ENCODE measurements at regions of chr4 and their contacts with region 1.

Region 1: DNA sequence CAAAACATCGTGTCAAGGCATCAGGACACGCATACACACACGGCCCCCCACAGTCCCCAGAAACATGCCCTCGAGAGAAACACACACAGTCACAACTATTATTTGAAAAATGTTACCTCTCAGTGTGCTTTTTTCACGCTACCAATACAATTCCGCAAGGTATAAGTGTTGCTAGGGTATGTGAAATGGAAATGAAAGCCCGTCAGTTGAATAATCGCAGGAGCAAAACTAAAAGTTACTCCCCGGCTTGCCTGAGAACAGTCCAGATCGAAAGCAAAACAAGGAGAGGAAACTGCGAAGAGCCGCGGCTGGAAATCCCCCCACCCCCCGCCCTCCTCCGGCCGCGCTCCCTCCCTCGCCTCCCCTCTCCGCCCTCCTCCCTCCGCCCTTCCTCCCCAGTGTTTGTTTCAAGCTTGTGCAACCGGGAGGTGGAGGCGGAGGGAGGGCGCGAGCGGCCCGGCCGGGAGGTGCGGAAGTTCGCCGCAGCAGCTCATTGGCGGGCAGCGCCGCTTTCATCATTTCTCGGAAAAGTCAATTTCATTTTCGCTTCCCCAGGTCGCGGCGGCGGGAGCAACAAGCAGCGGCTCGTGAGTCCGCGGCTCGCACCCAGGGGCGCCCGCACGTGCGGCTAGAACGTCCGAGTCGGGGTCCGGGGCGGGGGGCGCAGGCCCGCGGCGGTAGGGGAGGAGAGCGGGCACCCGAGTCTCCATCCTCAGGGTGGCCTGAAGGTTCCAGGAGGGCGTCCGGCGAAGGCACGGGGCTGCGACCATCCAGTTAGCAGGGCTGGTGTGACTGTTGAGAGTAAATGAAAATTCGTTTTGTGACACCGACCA is at the start of gene IRF2:
- DNase-seq: peak; percentile 97
- H3K4me3 ChIP-seq: peak within 1 kb of the TSS; percentile 89
- H3K27ac ChIP-seq: peak within 1 kb of the TSS; percentile 89
- H3K4me1 ChIP-seq: peaks cover 55% of the 10 kb centered on the region
- CTCF ChIP-seq: no peak; the same call in 1 of the 2 replicates
- total RNA-seq, gene IRF2: 29.7 and 32.3 TPM in 2 replicates

Region 2: GRCh38 chr4:184287697-184288255 is 186.7 kb before region 1 on chr4:
- CTCF ChIA-PET with region 1: interaction called, 4 read pairs
- POLR2A ChIA-PET with region 1: interaction called, 12 read pairs
- intact Hi-C with region 1: loop called (anchors 1 kb)
- DNase-seq: peak; percentile 55
- H3K4me3 ChIP-seq: peak overlapping the region; percentile 58
- H3K27ac ChIP-seq: peak overlapping the region; percentile 96
- H3K4me1 ChIP-seq: peaks cover 99% of the 10 kb centered on the region
- CTCF ChIP-seq: peak; percentile 39; the same call in 1 of the 2 replicates

Region 3: DNA sequence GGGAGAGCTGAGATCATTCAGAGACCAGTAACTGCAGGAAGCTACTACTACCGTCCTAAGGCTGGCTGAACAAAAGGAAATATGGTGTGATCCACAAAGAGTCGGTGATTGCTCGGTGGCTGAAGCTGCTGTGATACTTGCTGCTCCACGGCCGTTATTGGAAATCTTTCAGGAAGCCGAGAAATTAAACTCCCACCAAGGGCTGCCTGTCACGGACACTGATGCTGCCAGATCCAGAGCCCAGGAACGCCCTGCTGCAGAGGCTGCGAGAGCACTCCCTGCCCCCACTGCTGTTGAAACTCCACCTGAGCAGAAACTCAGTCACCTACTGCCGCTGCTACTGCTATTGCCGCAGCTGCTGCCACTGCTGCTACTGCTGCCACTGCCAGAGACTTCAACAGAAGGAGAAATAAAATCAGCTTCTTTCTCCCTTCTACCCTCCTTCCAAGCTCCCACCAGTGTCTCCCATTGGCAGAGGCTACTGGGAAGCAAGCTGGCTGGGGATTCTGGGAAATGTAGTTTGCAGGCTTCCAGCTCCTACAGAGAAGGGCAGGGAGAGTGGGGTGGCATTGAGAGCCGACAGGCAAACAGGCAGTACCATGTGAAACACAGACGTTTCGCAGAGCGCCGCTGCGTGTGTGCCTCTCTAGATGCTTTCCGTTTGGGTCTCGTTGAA is 130.8 kb before region 1 on chr4:
- CTCF ChIA-PET with region 1: no interaction called
- POLR2A ChIA-PET with region 1: interaction called, 7 read pairs
- intact Hi-C with region 1: loop called (anchors 2 kb)
- DNase-seq: peak; percentile 64
- H3K4me3 ChIP-seq: peak overlapping the region; percentile 61
- H3K27ac ChIP-seq: peak overlapping the region; percentile 26
- H3K4me1 ChIP-seq: peaks cover 66% of the 10 kb centered on the region
- CTCF ChIP-seq: no peak

Region 4: DNA sequence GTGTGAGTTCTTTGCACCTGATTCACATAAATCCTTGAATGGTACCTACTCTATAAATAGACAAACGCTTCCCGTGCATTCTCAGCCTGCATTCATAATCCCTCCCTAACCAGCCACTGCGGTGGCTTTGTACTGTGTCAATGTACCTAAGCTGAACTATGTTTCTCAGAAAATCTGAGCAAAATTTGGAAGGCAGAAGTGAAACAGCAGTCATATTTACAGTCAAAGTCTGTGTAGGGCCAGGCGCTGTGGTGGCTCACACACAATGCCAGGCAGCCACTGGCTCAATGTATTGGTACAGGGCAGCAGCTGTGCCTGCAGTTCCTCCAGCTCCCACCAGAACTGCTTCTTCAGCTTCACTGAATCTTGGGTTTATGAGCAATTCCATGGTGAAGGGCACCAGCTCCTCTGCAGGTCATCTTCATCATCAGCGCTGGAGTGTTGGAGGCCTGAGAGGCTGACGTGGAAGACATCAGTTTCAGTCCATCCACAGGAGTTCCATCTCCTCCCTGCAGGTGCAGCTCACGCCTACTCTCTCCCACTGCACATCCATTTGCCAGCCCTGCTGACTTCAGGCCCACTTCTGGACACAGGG is 32.1 kb after region 1 on chr4:
- CTCF ChIA-PET with region 1: no interaction called
- POLR2A ChIA-PET with region 1: interaction called, 4 read pairs
- intact Hi-C with region 1: loop called (anchors 1 kb)
- DNase-seq: peak; percentile 85
- H3K4me3 ChIP-seq: no peak overlapping the region
- H3K27ac ChIP-seq: peak overlapping the region; percentile 40
- H3K4me1 ChIP-seq: peaks cover 33% of the 10 kb centered on the region
- CTCF ChIP-seq: peak; percentile 60

Region 5: GRCh38 chr4:184733654-184734524 is 259.4 kb after region 1 on chr4 and contains the start of gene CENPU:
- CTCF ChIA-PET with region 1: no interaction called
- POLR2A ChIA-PET with region 1: interaction called, 3 read pairs
- intact Hi-C with region 1: loop called (anchors 5 kb)
- DNase-seq: peak; percentile 99
- H3K4me3 ChIP-seq: peak within 1 kb of the TSS; percentile 94
- H3K27ac ChIP-seq: peak within 1 kb of the TSS; percentile 84
- H3K4me1 ChIP-seq: peaks cover 30% of the 10 kb centered on the region
- CTCF ChIP-seq: no peak
- total RNA-seq, gene CENPU: 83.9 and 85.1 TPM in 2 replicates